ENCODE measurements at regions of chr15 and their contacts with region 1.

Region 1: GRCh38 chr15:45457641-45458433 is 64.7 kb downstream of the SLC30A4 start:
- DNase-seq: peak; percentile 66
- H3K4me3 ChIP-seq: peak overlapping the region; percentile 26 to 49 (median 47)
- H3K27ac ChIP-seq: peak overlapping the region; percentile 76
- H3K4me1 ChIP-seq: peaks cover 38% of the 10 kb centered on the region
- H3K27me3 ChIP-seq: no peaks in the 10 kb centered on the region
- CTCF ChIP-seq: peak; percentile 54 to 70

Region 2: GRCh38 chr15:45205192-45205591 is 252.6 kb before region 1 on chr15:
- CTCF ChIA-PET with region 1: interaction called, 4 read pairs
- dilution Hi-C with region 1: no loop called
- in situ Hi-C with region 1: no loop called
- intact Hi-C with region 1: loop called (anchors 1 kb)
- DNase-seq: peak; percentile 57
- H3K4me3 ChIP-seq: no peak overlapping the region
- H3K27ac ChIP-seq: no peak overlapping the region
- H3K4me1 ChIP-seq: no peaks in the 10 kb centered on the region
- H3K27me3 ChIP-seq: no peaks in the 10 kb centered on the region
- CTCF ChIP-seq: peak; percentile 97 to 99

Region 3: DNA sequence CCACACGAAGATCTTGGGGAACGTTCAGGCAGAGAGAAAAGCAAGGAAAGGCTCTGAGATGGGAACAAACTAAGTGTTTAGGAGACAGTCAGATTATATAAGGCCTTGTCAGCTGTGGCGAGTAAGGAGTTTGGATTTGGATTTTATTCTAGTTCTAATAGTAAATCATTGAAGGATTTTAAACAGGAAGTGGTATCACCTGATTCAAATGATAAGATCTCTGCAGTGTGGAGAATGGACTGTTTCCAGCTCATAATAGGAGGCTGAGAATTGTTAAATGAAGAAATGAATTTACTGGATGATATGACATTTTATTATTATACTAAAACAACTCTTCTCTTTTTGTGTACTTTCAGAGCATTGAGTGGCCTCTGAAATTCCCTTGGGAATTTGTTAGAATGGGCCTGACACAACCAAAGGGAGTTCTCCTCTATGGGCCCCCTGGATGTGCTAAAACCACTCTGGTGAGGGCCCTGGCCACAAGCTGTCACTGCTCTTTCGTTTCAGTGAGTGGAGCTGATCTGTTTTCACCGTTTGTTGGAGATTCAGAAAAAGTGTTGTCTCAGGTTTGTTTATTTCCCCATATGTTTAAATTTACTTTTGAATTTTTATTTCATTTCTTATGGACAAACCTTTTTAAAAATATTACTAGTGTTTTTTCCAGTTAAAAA is 43.5 kb before region 1 on chr15:
- CTCF ChIA-PET with region 1: no interaction called
- dilution Hi-C with region 1: loop called (anchors 5 kb)
- in situ Hi-C with region 1: no loop called
- intact Hi-C with region 1: no loop called
- DNase-seq: no peak
- H3K4me3 ChIP-seq: no peak overlapping the region
- H3K27ac ChIP-seq: no peak overlapping the region
- H3K4me1 ChIP-seq: no peaks in the 10 kb centered on the region
- H3K27me3 ChIP-seq: no peaks in the 10 kb centered on the region
- CTCF ChIP-seq: no peak

Region 4: GRCh38 chr15:45443645-45444044 is 14.2 kb before region 1 on chr15:
- CTCF ChIA-PET with region 1: interaction called, 10 read pairs
- dilution Hi-C with region 1: no loop called
- in situ Hi-C with region 1: no loop called
- intact Hi-C with region 1: no loop called
- DNase-seq: no peak
- H3K4me3 ChIP-seq: no peak overlapping the region
- H3K27ac ChIP-seq: no peak overlapping the region
- H3K4me1 ChIP-seq: peaks cover 6% of the 10 kb centered on the region
- H3K27me3 ChIP-seq: no peaks in the 10 kb centered on the region
- CTCF ChIP-seq: no peak

Region 5: GRCh38 chr15:45611305-45611704 is 153.5 kb after region 1 on chr15:
- CTCF ChIA-PET with region 1: interaction called, 3 read pairs
- dilution Hi-C with region 1: no loop called
- in situ Hi-C with region 1: loop called (anchors 5 to 10 kb)
- intact Hi-C with region 1: loop called (anchors 1 kb)
- DNase-seq: no peak
- H3K4me3 ChIP-seq: no peak overlapping the region
- H3K27ac ChIP-seq: no peak overlapping the region
- H3K4me1 ChIP-seq: peaks cover 4% of the 10 kb centered on the region
- H3K27me3 ChIP-seq: no peaks in the 10 kb centered on the region
- CTCF ChIP-seq: peak; percentile 39

Measured in mammary epithelial cell (primary cell).